Dendritic cell treated with granulocyte-macrophage colony-stimulating factor and Interleukin-4, amounts not matched to agents 40 ng/mL and 50 ng/mL, for 4 days (primary cell): ENCODE measurements at regions of chr19 and their contacts with region 1.

Region 1: DNA sequence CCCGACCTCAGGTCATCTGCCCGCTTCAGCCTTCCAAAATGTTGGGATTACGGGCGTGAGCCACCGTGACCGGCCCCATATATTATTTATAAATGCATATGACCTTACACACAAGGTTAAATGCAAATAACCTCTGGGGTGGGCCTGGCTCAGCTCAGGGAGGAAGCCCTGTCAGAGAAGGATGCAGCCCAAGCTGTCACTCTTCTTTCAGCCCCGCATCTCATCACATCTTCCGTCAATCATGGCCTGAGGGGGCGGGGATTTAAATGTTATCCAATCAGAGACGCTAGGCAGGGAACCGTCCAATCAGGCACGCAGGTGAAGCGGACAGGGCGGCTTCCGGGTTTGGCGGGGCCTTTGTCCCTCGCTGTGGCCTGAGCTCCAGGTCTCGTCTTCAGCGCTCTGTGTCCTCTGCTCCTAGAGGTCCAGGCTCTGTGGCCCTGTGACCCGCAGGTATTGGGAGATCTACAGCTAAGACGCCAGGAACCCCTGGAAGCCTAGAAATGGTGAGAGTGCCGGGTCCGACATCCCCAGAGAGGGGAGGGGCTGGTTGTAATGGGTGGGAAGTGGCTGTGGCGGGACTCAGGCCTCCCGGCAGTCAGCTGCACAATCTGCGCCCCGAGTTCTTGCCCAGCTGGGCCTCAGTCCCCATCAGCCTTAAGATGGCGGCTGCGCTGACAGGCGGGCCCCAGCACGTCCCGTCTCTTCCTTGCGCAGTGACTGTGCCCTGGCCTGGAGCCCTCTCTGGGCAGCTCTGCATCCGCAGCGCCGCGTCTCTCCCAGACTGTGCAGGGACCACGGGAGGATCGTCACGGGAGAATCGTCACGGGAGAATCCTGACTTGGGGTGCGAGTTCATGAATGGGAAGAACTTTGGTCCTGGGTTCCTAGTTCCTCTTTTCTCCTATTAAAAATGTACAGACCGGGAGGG is at the start of gene ZNF430:
- H3K4me3 Mint-ChIP-seq: peak within 1 kb of the TSS; percentile 94
- H3K27ac Mint-ChIP-seq: peak within 1 kb of the TSS; percentile 99
- H3K4me1 Mint-ChIP-seq: peaks cover 17% of the 10 kb centered on the region
- H3K27me3 Mint-ChIP-seq: no peaks in the 10 kb centered on the region

Region 2: GRCh38 chr19:21082011-21082975 is 61.7 kb after region 1 on chr19 and contains the start of gene ZNF714:
- intact Hi-C with region 1: loop called (anchors 1 kb)
- H3K4me3 Mint-ChIP-seq: peak within 1 kb of the TSS; percentile 99
- H3K27ac Mint-ChIP-seq: peak within 1 kb of the TSS; percentile 99
- H3K4me1 Mint-ChIP-seq: peaks cover 11% of the 10 kb centered on the region
- H3K27me3 Mint-ChIP-seq: no peaks in the 10 kb centered on the region

Region 3: DNA sequence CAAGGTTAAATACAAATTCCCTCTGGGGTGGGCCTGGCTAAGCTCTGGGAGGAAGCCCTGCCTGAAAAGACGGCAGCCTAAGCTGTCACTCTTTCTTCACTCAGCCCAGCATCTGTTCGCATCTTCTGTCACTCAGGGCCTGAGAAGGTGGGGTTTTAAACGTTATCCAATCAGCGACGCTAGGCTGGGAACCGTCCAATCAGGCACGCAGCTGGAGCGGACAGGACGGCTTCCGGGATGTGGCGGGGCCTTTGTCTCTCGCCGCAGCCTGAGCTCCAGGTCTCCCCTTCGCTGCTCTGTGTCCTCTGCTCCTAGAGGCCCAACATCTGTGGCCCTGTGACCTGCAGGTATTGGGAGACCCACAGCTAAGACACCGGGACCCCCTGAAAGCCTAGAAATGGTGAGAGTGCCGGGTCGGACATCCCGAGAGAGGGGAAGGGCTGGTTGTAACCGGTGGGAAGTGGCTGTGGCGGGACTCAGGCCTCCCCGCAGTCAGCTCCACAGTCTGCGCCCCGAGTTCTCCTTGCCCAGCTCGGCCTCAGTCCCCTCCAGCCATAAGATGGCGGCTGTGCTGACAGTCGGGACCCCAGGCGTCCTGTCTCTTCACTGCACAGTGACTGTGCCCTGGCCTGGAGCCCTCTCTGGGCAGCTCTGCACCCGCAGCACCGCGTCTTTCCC is 121.4 kb after region 1 on chr19 and contains the start of gene ZNF431:
- intact Hi-C with region 1: loop called (anchors 10 kb)
- H3K4me3 Mint-ChIP-seq: peak within 1 kb of the TSS; percentile 98
- H3K27ac Mint-ChIP-seq: peak within 1 kb of the TSS; percentile 97
- H3K4me1 Mint-ChIP-seq: peaks cover 14% of the 10 kb centered on the region
- H3K27me3 Mint-ChIP-seq: no peaks in the 10 kb centered on the region

Region 4: GRCh38 chr19:21328885-21329605 is 308.5 kb after region 1 on chr19 and contains the start of gene ZNF708:
- intact Hi-C with region 1: loop called (anchors 10 kb)
- H3K4me3 Mint-ChIP-seq: peak within 1 kb of the TSS; percentile 100
- H3K27ac Mint-ChIP-seq: peak within 1 kb of the TSS; percentile 100
- H3K4me1 Mint-ChIP-seq: peaks cover 22% of the 10 kb centered on the region
- H3K27me3 Mint-ChIP-seq: no peaks in the 10 kb centered on the region